ENCODE measurements at regions of chr18 and their contacts with region 1.

Region 1: DNA sequence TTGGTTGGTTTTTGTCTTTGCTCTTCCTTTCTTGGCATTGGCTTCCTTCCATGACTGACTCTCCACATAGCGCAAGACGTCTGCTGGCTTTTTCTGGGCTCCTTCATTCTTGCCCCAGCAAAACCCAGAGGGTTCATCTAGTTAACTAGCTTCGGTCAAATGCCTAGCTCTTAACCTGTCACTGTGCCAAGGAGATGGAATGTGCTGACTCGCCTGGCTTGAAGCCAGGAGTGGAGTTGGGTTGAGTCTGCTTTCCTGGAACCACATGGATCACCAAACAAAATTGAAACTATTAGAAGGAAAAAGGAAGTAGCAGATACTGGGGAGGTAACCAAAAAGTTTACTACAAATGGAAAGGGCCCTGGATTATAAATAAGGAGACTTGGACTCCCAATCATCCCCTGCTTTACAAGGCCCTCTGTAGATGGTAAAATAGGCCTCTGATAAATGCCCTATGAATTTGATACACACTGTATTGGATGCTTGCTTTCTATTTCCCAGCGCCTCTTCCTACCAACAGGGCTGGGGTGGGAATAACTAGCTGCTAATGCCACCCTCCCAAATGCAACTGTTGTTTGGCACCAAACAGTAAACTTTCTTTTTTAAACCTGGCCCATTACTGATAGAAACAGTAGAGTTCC is 11.3 kb downstream of the MALT1 start:
- DNase-seq: peak; percentile 42 to 47
- ATAC-seq: peak in 6 of 8 donors; percentile 33 to 70 (median 56)
- H3K4me3 ChIP-seq: no peak overlapping the region
- H3K27ac ChIP-seq: peak overlapping the region in 2 of 10 donors; percentile 39 to 75
- H3K4me1 ChIP-seq: peaks cover 0 to 24% (median 11%) of the 10 kb centered on the region in 9 donors
- H3K27me3 ChIP-seq: no peaks in the 10 kb centered on the region
- CTCF ChIP-seq: no peak

Region 2: GRCh38 chr18:58727776-58728500 is 45.4 kb after region 1 on chr18:
- intact Hi-C with region 1: loop called in 2 of 10 experiments (anchors 10 kb)
- DNase-seq: peak in 1 of 2 donors; percentile 28
- ATAC-seq: peak in 2 of 8 donors; percentile 71 to 76
- H3K4me3 ChIP-seq: no peak overlapping the region
- H3K27ac ChIP-seq: no peak overlapping the region
- H3K4me1 ChIP-seq: peaks cover 0 to 10% (median 0%) of the 10 kb centered on the region in 9 donors
- H3K27me3 ChIP-seq: no peaks in the 10 kb centered on the region
- CTCF ChIP-seq: no peak

Measured in heart right ventricle (tissue), 16 donors.